PC-9 (cell line): ENCODE measurements at regions of chr2 and their contacts with region 1.

Region 1: DNA sequence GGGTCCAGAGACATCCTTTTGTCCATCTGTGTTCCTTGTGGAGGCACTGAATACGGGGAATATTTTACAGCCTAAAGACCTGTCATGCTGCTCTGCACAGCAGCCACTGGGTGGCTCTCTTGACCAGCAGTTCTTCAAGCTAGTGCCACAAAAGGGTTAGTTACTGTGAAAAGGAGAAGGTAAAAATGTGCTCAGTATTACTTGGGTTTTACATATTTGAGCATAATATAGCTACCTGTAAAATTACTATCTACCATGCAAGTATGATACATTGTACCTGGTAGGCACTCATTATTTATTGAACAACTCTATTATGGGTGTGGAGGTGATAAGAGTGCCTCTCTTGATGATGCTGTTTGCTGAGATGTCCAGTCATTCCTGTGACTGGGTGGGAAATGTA is 23.6 kb downstream of the FZD5 start:
- DNase-seq: peak; percentile 40 to 50
- H3K4me3 ChIP-seq: no peak overlapping the region
- H3K27ac ChIP-seq: no peak overlapping the region
- H3K4me1 ChIP-seq: peaks cover 21% of the 10 kb centered on the region
- H3K27me3 ChIP-seq: no peaks in the 10 kb centered on the region
- CTCF ChIP-seq: peak; percentile 84

Region 2: GRCh38 chr2:207558106-207558505 is 188.0 kb before region 1 on chr2:
- CTCF ChIA-PET with region 1: no interaction called
- POLR2A ChIA-PET with region 1: no interaction called
- intact Hi-C with region 1: no loop called
- DNase-seq: no peak
- H3K4me3 ChIP-seq: no peak overlapping the region
- H3K27ac ChIP-seq: no peak overlapping the region
- H3K4me1 ChIP-seq: peaks cover 20% of the 10 kb centered on the region
- H3K27me3 ChIP-seq: no peaks in the 10 kb centered on the region
- CTCF ChIP-seq: no peak

Region 3: GRCh38 chr2:207676827-207677354 is 69.2 kb before region 1 on chr2:
- CTCF ChIA-PET with region 1: no interaction called
- POLR2A ChIA-PET with region 1: no interaction called
- intact Hi-C with region 1: no loop called
- DNase-seq: peak in 1 of 2 experiments; percentile 85
- H3K4me3 ChIP-seq: no peak overlapping the region
- H3K27ac ChIP-seq: peak overlapping the region; percentile 76
- H3K4me1 ChIP-seq: peaks cover 17% of the 10 kb centered on the region
- H3K27me3 ChIP-seq: no peaks in the 10 kb centered on the region
- CTCF ChIP-seq: no peak

Region 4: DNA sequence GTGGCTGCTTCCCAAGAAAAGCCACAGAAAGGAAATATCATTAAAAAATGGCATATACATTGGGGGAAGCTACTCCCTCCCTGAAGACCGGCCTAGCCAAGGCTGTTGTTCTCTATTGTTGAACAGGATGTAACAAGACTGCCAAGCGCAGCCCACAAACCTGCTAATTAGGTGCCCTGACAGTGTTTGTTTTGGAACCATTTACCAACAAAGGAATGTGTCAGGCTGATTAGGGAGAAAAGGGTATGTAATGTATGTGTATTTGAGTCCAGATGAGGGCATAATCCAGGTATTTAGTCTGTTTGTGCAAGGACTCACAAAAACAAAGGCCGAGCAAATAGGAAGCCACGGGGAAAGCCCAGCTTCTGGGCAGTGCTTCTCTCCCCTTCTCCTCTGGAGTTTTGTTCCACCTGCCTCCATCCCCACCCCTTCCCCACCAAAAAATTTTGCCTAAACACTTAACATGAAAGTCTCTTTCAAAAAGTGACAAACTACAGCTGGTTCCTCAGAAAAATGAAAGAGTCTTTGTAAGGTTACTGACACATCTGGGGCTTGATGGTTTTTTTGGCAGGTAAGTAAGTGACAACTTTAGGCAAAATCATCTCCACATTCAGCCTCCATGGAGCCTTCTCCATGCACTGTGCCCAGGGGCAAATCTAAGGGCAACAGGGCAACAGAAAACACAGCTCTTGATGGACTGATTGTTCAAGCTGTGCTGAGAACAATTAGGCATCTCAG is 101.8 kb after region 1 on chr2:
- CTCF ChIA-PET with region 1: no interaction called
- POLR2A ChIA-PET with region 1: no interaction called
- intact Hi-C with region 1: no loop called
- DNase-seq: peak; percentile 70 to 96
- H3K4me3 ChIP-seq: no peak overlapping the region
- H3K27ac ChIP-seq: peak overlapping the region; percentile 46
- H3K4me1 ChIP-seq: peaks cover 26% of the 10 kb centered on the region
- H3K27me3 ChIP-seq: no peaks in the 10 kb centered on the region
- CTCF ChIP-seq: no peak

Region 5: GRCh38 chr2:207914716-207915115 is 168.6 kb after region 1 on chr2:
- CTCF ChIA-PET with region 1: no interaction called
- POLR2A ChIA-PET with region 1: no interaction called
- intact Hi-C with region 1: no loop called
- DNase-seq: no peak
- H3K4me3 ChIP-seq: no peak overlapping the region
- H3K27ac ChIP-seq: no peak overlapping the region
- H3K4me1 ChIP-seq: no peaks in the 10 kb centered on the region
- H3K27me3 ChIP-seq: no peaks in the 10 kb centered on the region
- CTCF ChIP-seq: no peak

Region 6: GRCh38 chr2:207974216-207974605 is 228.1 kb after region 1 on chr2:
- CTCF ChIA-PET with region 1: no interaction called
- POLR2A ChIA-PET with region 1: interaction called, 3 read pairs
- intact Hi-C with region 1: loop called (anchors 1 kb)
- DNase-seq: peak; percentile 13 to 88
- H3K4me3 ChIP-seq: no peak overlapping the region
- H3K27ac ChIP-seq: peak overlapping the region; percentile 32; the same call in 1 of the 2 replicates
- H3K4me1 ChIP-seq: peaks cover 13% of the 10 kb centered on the region
- H3K27me3 ChIP-seq: no peaks in the 10 kb centered on the region
- CTCF ChIP-seq: no peak

Region 7: GRCh38 chr2:208040199-208041171 is 294.4 kb after region 1 on chr2:
- CTCF ChIA-PET with region 1: interaction called, 8 read pairs
- POLR2A ChIA-PET with region 1: no interaction called
- intact Hi-C with region 1: loop called (anchors 1 kb)
- DNase-seq: peak; percentile 33 to 45
- H3K4me3 ChIP-seq: no peak overlapping the region
- H3K27ac ChIP-seq: no peak overlapping the region
- H3K4me1 ChIP-seq: peaks cover 16% of the 10 kb centered on the region
- H3K27me3 ChIP-seq: no peaks in the 10 kb centered on the region
- CTCF ChIP-seq: peak; percentile 57

Region 8: GRCh38 chr2:208101716-208102631 is 355.8 kb after region 1 on chr2:
- CTCF ChIA-PET with region 1: interaction called, 13 read pairs
- POLR2A ChIA-PET with region 1: no interaction called
- intact Hi-C with region 1: no loop called
- DNase-seq: peak in 1 of 2 experiments; percentile 38
- H3K4me3 ChIP-seq: no peak overlapping the region
- H3K27ac ChIP-seq: no peak overlapping the region
- H3K4me1 ChIP-seq: no peaks in the 10 kb centered on the region
- H3K27me3 ChIP-seq: no peaks in the 10 kb centered on the region
- CTCF ChIP-seq: peak; percentile 65

Region 9: DNA sequence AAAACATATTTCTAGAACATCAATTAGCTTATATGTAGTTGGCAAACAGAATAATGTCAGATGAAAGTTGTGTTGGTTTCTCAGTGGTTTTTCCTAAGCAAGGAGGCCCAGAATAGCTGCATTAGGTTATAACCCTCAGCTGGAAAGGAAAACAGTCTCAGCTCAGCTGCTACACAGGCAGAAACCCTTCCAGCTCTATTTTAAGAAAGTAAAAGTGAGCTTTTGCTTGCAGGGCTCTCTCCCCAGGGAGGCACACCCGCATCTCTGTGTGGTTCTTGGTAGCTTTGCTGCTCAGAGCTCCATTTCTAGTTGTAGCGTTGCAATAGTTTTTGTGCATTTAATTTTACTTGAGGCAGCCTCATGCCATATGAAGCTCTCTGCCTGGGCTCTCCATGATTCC is 574.6 kb after region 1 on chr2:
- CTCF ChIA-PET with region 1: interaction called, 16 read pairs
- POLR2A ChIA-PET with region 1: no interaction called
- intact Hi-C with region 1: no loop called
- DNase-seq: no peak
- H3K4me3 ChIP-seq: no peak overlapping the region
- H3K27ac ChIP-seq: no peak overlapping the region
- H3K4me1 ChIP-seq: no peaks in the 10 kb centered on the region
- H3K27me3 ChIP-seq: no peaks in the 10 kb centered on the region
- CTCF ChIP-seq: no peak